ENCODE measurements at regions of chr20 and their contacts with region 1.

Region 1: DNA sequence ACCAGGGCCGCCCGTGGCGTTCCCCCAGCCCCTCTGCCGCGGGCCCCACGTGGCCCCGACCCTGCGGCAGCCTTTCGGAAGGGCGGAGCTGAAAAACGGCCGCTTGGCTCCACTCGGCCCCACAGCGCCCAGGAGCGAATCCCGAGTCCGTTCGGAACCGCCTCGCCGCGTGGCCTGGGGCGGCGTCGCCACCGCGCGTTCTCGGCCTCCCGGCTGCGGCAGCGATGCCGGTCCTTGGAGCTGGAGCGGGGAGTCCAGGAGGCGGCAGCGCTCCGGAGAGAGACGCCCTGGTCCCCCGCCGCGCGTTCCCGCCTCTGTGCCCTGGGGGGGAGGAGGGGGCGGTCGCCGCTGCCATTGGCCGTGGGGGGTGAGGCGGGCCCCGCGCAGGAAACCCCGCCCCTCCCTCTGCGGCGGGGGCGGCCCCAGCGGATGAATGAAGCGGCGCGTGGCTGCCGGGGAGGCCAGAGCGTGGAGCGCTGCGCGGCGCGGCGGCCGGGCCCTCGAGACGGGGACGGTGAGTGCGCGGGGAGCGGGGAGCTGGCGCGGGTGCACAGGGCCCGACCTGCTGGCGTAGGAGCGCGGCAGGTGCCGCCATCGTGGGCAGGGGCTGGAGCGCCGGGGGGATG is at the start of gene SLCO4A1:
- DNase-seq: peak; percentile 91
- H3K4me3 Mint-ChIP-seq: peak within 1 kb of the TSS; percentile 90
- H3K27ac Mint-ChIP-seq: peak within 1 kb of the TSS; percentile 89
- H3K4me1 Mint-ChIP-seq: peaks cover 43% of the 10 kb centered on the region
- H3K27me3 Mint-ChIP-seq: peaks cover 16% of the 10 kb centered on the region
- total RNA-seq, gene SLCO4A1: 54.2 to 55.2 TPM

Region 2: GRCh38 chr20:62616728-62617621 is 25.2 kb before region 1 on chr20:
- CTCF ChIA-PET with region 1: interaction called, 13 read pairs
- POLR2A ChIA-PET with region 1: no interaction called
- DNase-seq: peak; percentile 70
- H3K4me3 Mint-ChIP-seq: no peak overlapping the region
- H3K27ac Mint-ChIP-seq: peak overlapping the region; percentile 95
- H3K4me1 Mint-ChIP-seq: peaks cover 38% of the 10 kb centered on the region
- H3K27me3 Mint-ChIP-seq: peaks cover 13% of the 10 kb centered on the region

Region 3: DNA sequence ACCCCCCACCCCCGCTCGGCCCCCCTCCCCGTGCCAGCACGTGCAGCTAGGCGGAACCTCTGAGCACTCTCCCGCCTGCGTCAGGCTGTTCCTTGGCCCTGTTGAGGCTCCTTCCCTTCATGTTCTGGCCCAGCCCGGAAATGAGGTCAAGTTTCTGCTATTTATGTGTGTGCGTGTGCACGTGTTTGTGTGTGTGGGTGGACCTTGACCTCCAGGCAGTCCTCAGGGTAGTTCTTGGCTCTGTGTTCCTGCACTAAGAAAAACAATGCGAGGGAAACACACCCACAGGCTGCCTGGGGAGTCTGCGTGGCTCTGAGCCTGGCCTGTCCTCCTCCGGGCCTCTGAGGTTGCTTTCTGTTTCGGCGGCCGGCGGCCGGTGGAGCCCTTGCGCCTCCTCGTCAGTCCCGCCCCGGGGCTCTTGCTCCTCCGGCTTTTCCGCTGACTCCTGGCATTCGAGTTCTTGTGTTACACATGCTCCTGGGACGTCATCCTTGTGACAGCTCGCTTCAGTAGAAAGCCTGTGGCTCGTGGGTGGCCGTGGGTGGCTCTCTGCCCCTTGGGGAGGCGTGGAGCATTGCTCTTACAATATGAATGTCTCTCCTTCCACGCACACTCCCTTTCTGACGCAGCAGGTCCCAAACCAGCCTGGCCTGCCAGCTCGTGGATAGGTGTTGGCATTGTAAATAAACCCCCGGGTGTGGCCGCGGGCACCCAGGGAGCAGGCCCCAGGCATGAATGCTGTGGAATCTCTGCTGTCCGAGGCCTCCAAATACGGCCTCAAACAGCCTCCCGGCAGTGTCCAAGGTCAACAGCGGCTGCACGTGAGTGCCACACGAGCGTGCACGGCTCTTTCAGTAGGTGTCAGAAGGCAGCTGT is 10.1 kb after region 1 on chr20:
- CTCF ChIA-PET with region 1: interaction called, 10 read pairs
- POLR2A ChIA-PET with region 1: interaction called, 3 read pairs
- DNase-seq: peak; percentile 80
- H3K4me3 Mint-ChIP-seq: peak overlapping the region; percentile 75
- H3K27ac Mint-ChIP-seq: peak overlapping the region; percentile 96
- H3K4me1 Mint-ChIP-seq: peaks cover 64% of the 10 kb centered on the region
- H3K27me3 Mint-ChIP-seq: no peaks in the 10 kb centered on the region

Region 4: DNA sequence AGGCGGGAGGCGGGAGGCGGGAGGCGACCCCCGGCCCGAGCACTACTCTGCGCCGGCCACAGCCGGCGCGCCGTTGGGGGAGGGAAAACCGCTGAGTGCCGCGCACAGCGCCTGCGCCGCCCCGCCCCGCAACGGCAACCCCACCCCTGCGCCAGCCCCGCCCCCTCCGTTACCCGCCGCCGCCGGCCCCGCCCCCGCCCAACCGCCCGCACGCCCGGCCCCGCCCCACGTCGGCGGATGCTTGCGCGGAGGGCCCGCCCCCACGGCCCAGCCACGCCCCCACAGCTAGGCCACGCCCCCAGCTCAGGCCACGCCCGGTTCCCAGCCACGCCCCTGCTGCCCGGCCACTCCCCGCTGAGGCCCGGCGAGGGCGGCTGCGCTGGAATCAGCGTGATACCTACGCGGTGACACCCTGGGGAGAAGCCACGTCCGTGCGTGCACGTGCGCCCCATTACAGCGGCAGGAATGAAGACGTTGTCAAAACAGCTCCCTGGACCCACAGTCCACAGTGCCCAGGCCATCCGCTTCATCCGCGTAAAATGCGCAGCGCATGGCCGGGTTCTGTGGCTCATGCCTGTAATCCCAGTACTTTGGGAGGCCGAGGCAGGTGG is 219.7 kb after region 1 on chr20 and contains the start of gene TCFL5:
- CTCF ChIA-PET with region 1: no interaction called
- POLR2A ChIA-PET with region 1: no interaction called
- DNase-seq: peak; percentile 90
- H3K4me3 Mint-ChIP-seq: peak within 1 kb of the TSS; percentile 59
- H3K27ac Mint-ChIP-seq: peak within 1 kb of the TSS; percentile 54
- H3K4me1 Mint-ChIP-seq: peaks cover 23% of the 10 kb centered on the region
- H3K27me3 Mint-ChIP-seq: peaks cover 5% of the 10 kb centered on the region
- total RNA-seq, gene TCFL5: 7.9 to 8.4 TPM

Measured in activated CD4-positive, alpha-beta T cell treated with anti-CD3 and anti-CD28 coated beads, Interleukin-2, amount 10 ng/mL, durations not matched to agents 7 days and 5 days (primary cell).